ENCODE measurements at regions of chr6 and their contacts with region 1.

Region 1: DNA sequence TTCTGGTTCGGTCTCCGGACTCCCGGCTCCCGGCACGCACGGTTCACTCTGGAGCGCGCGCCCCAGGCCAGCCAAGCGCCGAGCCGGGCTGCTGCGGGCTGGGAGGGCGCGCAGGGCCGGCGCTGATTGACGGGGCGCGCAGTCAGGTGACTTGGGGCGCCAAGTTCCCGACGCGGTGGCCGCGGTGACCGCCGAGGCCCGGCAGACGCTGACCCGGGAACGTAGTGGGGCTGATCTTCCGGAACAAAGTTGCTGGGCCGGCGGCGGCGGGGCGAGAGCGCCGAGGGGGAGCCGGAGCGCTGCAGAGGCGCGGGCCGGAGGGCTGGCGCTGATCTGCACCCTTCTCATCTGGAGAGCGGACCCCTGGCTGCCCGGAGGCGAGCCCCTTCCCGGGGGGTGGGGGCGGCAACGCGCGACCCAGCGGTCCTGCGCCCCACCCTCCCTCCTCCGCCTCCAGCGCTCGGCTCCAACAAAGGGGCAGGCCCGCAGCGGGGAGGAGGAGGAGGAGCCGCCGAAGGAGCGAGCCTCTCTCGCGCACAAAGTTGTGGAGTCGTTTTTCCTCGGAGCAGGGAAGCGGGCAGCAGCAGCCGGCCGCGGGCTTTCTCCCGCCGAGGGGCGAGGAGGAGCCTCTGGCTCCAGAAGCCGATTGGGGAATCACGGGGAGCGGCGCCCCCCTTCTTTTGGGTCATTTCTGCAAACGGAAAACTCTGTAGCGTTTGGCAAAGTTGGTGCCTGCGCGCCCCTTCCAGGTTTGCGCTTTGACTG is at the start of gene UTRN:
- H3K4me3 Mint-ChIP-seq: peak within 1 kb of the TSS; percentile 95
- H3K27ac Mint-ChIP-seq: peak within 1 kb of the TSS; percentile 94
- H3K4me1 Mint-ChIP-seq: peaks cover 28% of the 10 kb centered on the region
- H3K27me3 Mint-ChIP-seq: no peaks in the 10 kb centered on the region

Region 2: DNA sequence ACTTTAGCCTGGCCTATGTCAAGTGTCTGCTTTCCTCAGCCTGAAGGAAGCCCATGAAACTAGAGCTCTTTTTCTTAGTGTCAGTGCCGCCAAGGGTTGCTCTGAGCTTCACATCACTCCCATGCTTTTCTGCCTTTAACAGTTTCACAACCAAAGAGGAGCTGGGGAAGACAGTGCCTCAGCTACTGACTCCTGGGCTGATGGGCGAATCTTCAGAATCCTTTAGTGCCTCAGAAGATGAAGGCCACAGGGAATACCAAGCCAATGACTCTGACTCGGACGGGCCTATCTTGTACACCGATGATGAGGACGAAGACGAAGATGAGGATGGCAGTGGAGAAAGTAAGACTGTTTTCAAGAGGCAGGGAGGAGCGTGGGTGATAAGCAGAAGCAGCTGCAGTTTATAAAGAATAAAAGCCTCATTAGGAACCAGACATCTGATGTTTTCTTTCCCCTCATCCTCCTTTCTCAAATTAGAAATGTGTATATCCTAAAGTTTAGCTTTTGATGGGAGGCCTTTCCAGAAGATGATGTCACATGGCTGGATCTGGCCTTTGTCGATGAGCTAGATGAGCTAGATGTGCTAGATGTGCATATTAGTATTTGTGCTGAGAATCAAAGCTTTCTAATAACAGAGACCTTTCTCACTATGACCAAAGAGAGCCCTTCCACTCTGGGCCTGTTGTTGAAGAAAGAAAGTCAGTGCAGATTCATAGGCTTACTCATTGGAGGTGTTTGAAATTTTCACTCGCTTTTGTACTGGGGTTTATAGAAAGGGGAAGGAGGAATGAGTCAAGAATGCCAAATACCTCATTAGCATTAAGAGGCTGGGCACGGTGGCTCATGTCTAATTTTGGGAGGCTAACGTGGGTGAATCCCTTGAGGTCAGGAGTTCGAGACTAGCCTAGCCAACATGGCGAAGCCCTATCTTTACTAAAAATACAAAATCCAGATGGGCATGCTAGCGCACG is 512.6 kb before region 1 on chr6:
- intact Hi-C with region 1: no loop called
- H3K4me3 Mint-ChIP-seq: no peak overlapping the region
- H3K27ac Mint-ChIP-seq: no peak overlapping the region
- H3K4me1 Mint-ChIP-seq: peaks cover 17% of the 10 kb centered on the region
- H3K27me3 Mint-ChIP-seq: no peaks in the 10 kb centered on the region

Region 3: GRCh38 chr6:144149891-144150709 is 134.9 kb before region 1 on chr6 and contains the start of gene STX11:
- intact Hi-C with region 1: loop called (anchors 2 kb)
- H3K4me3 Mint-ChIP-seq: peak within 1 kb of the TSS; percentile 80
- H3K27ac Mint-ChIP-seq: peak within 1 kb of the TSS; percentile 91
- H3K4me1 Mint-ChIP-seq: peaks cover 42% of the 10 kb centered on the region
- H3K27me3 Mint-ChIP-seq: no peaks in the 10 kb centered on the region

Region 4: DNA sequence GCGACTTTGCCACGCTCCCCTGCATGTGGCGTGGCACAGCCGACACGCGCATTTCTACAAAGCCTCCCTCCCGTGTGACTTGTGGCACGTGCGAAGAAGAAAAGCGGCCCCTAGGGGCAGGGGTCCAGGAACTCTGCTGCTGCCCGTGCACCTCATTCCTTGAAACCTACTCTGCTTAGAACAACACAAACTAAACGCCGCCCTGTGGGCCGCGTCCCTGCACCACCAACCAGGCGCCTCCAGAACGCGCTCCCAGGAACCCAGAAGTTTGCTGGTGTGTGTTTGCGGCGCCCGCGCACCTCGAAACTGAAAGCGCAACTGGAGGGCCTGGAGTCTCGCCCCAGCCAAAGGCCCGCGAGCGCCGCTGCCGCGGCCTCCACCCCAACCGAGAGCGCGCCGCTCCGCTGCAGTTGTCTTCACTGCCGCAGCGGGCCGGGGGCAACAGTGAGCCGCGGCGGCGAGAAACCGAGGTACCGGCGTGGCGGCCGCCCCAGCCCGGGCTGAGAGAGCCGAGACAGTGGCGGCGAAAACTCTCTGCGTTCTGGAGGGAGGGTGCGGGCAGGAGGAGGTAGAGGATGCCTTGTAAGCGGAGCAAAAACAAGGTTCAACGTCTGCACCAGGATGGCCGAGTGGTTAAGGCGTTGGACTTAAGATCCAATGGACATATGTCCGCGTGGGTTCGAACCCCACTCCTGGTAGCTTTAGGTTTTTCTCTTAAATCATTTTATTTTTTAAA is 68.9 kb before region 1 on chr6:
- intact Hi-C with region 1: loop called (anchors 1 kb)
- H3K4me3 Mint-ChIP-seq: peak overlapping the region; percentile 87
- H3K27ac Mint-ChIP-seq: peak overlapping the region; percentile 93
- H3K4me1 Mint-ChIP-seq: peaks cover 35% of the 10 kb centered on the region
- H3K27me3 Mint-ChIP-seq: no peaks in the 10 kb centered on the region

Region 5: GRCh38 chr6:144343701-144344428 is 58.9 kb after region 1 on chr6:
- intact Hi-C with region 1: loop called (anchors 5 kb)
- H3K4me3 Mint-ChIP-seq: peak overlapping the region; percentile 23
- H3K27ac Mint-ChIP-seq: peak overlapping the region; percentile 76
- H3K4me1 Mint-ChIP-seq: peaks cover 87% of the 10 kb centered on the region
- H3K27me3 Mint-ChIP-seq: no peaks in the 10 kb centered on the region

Region 6: DNA sequence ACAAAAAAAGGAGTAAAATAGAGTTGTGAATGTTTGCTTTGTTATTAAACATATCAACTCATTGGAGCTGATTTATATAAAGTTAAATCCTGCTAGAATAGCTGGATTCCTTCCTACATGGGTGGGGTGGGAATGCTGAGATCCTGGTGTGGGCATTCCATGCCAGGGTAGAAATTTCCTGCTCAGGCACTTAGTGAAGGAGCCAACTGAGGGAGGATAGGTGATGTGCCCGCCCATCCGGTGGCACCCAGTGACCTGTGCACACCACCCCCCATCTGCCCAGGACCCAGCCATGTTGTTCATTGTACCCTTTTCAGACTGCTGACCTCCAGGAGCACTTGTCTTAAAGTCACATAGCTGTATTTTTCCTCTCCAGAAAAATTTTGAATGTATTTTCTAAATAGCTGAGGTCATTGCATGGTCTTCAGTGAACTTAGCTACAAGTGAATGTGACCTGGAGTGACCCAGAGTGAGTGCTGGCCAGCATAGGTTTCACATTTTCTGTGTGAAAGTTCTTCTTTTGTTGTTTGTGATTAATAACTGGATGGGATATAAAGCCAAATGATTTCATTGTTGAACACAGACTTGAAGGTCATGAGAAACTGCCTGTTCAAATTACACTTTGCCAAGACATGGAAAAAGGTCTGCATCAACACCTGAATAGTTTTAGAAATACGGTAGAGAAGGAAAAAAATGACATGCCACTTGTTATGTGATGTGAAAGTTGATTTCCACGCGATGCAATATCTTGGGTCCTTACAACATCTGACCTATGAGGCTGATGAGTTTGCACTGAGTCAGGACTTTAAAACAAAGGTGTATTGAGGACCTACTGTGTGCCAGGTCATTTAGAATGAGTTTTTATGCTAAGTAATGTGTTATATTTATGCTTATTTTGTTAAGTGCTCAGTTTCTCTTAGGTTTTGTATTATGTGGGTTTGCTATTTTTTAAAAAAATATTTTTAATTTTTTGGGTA is 77.4 kb after region 1 on chr6:
- intact Hi-C with region 1: no loop called
- H3K4me3 Mint-ChIP-seq: no peak overlapping the region
- H3K27ac Mint-ChIP-seq: peak overlapping the region; percentile 58
- H3K4me1 Mint-ChIP-seq: peaks cover 70% of the 10 kb centered on the region
- H3K27me3 Mint-ChIP-seq: no peaks in the 10 kb centered on the region

Region 7: GRCh38 chr6:144482142-144482541 is 197.2 kb after region 1 on chr6:
- intact Hi-C with region 1: loop called (anchors 5 kb)
- H3K4me3 Mint-ChIP-seq: no peak overlapping the region
- H3K27ac Mint-ChIP-seq: no peak overlapping the region
- H3K4me1 Mint-ChIP-seq: no peaks in the 10 kb centered on the region
- H3K27me3 Mint-ChIP-seq: no peaks in the 10 kb centered on the region